Uterus (tissue), 4 donors: ENCODE measurements at regions of chr1 and their contacts with region 1.

Region 1: GRCh38 chr1:47710329-47711071 is 272.7 kb downstream of the FOXD2 start:
- DNase-seq: peak; percentile 43 to 69
- H3K4me3 ChIP-seq: no peak overlapping the region
- H3K27ac ChIP-seq: no peak overlapping the region
- H3K4me1 ChIP-seq: peaks cover 0 to 12% of the 10 kb centered on the region in 2 donors
- H3K27me3 ChIP-seq: peaks cover 20% of the 10 kb centered on the region in 2 donors
- CTCF ChIP-seq: peak; percentile 85 to 97 (median 92)
- POLR2A ChIP-seq: no peak

Region 2: DNA sequence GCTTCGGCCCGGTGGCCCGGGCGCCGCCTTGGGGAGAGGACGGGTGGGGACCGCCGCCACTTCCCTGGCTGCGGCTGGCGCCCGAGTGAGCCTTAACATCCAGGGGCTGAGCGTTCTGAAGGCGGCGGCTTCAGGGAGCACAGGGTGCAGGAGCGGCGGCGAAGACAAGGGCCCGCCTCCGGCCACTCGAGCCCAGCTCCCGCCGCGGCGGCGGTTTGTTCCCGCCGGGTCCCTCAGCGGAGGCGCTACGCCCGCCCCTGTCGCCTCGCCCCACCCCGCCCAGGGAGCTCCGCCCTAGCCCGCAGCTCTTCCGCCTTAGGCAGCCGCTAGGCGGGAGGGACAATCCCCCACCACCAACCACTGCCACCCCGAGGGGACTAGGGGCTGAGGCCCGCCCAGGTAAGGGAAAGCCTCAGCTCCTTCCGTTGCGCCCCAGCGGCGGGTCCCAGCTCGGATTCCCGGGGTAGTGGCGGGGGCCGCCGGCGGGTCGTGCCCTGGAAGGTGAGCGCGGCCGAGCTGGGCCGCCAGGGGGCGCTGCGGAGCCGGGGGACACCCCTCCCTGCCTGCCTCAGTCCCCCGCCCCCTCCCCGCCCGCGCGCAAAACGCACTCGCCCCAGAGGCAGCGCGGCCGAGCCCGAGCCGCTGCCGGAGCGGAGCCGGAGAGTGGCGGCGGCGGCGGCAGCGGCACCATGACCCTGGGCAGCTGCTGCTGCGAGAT is 272.9 kb before region 1 on chr1 and contains the start of gene FOXD2:
- intact Hi-C with region 1: loop called (anchors 10 kb)
- DNase-seq: peak; percentile 63 to 76
- H3K4me3 ChIP-seq: peak within 1 kb of the TSS; percentile 38 to 47
- H3K27ac ChIP-seq: peak within 1 kb of the TSS; percentile 47 to 74
- H3K4me1 ChIP-seq: peaks cover 0 to 28% of the 10 kb centered on the region in 2 donors
- H3K27me3 ChIP-seq: peaks cover 6 to 44% of the 10 kb centered on the region in 2 donors
- CTCF ChIP-seq: peak; percentile 81 to 96 (median 89)
- POLR2A ChIP-seq: peak; percentile 10 to 40
- total RNA-seq, gene FOXD2: 0.62 to 0.67 TPM in 2 of 4 donors, not detected in the others

Region 3: DNA sequence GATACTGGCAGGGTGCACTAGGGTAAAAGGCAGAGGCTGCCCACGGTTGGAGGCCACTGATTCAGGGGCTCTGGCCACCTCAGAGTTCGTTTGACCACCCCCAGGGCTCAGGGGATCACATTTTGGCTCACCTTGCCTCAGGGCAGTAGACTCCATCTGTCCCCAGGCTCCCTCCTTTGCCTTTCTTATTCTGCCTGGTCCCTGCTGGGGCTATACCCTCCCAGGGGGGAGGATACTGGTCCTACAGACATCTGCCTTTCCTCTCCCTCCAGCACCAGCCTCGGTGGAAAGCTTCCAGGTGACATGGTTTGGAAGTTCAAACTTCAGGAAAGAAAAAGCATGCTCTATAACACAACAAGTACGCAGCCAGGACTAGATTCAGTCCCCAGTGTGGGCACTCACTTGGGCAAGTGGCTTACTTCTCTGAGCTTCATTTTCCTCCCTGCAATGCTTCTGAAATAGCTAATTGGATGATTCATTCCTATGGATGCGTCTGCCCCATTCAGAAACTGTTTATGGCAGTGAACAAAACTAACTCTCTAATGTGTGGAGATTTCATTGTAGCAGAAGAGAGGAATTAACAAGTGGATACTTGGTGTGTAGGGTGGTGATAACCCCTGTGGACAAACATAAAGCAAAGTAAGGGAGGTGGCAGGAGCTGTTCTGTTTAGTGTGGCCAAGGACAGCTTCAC is 131.9 kb after region 1 on chr1:
- intact Hi-C with region 1: no loop called
- DNase-seq: no peak
- H3K4me3 ChIP-seq: no peak overlapping the region
- H3K27ac ChIP-seq: no peak overlapping the region
- H3K4me1 ChIP-seq: no peaks in the 10 kb centered on the region
- H3K27me3 ChIP-seq: no peaks in the 10 kb centered on the region
- CTCF ChIP-seq: no peak
- POLR2A ChIP-seq: no peak